ENCODE measurements at regions of chr5 and their contacts with region 1.

Region 1: GRCh38 chr5:80216753-80217596 is 38.9 kb downstream of the SERINC5 start:
- DNase-seq: peak; percentile 66
- H3K4me3 Mint-ChIP-seq: peak overlapping the region; percentile 79
- H3K27ac Mint-ChIP-seq: peak overlapping the region; percentile 90
- H3K4me1 Mint-ChIP-seq: peaks cover 87% of the 10 kb centered on the region
- H3K27me3 Mint-ChIP-seq: no peaks in the 10 kb centered on the region

Region 2: GRCh38 chr5:80174790-80175189 is 42.2 kb before region 1 on chr5:
- CTCF ChIA-PET with region 1: no interaction called
- intact Hi-C with region 1: no loop called
- DNase-seq: no peak
- H3K4me3 Mint-ChIP-seq: no peak overlapping the region
- H3K27ac Mint-ChIP-seq: peak overlapping the region; percentile 9
- H3K4me1 Mint-ChIP-seq: peaks cover 36% of the 10 kb centered on the region
- H3K27me3 Mint-ChIP-seq: no peaks in the 10 kb centered on the region

Region 3: DNA sequence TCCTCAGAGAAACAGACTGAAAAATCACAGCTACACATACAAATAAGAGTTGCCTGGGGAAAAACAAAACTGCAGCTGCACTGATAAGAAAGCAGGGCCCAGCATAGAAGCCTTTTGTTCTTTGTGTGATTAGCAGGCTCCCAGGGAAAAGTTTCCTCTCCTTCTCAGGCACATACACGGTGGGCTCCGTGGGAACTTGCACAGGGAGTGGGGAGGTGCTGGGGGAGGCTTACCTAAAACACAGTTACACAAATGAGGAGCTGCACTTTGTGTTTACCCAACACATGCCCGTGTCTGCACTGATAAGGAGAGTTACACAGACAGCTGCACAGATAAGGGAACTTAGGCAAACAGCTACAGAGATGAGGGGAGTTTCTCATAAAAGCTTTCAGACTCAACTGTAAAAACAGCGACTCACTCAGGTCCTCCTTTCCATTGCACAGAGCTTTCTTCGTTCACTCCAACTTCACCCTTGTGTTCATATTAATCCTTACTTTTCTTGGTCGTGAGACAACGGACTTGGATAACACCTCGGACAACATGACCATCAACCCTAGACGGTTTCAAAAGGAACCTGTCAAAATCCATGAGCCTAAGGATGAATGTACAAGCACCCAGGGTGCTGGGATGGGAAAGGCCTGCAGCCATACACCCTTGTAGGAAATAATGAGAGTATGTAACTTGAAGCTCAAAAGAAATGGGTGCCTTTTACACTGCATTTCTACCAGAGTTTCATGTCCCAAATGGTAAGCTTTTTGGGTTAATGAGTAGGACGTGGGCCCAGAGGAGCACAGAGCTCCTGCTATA is 12.0 kb before region 1 on chr5:
- CTCF ChIA-PET with region 1: interaction called, 6 read pairs
- intact Hi-C with region 1: loop called (anchors 1 kb)
- DNase-seq: peak; percentile 46
- H3K4me3 Mint-ChIP-seq: no peak overlapping the region
- H3K27ac Mint-ChIP-seq: peak overlapping the region; percentile 88
- H3K4me1 Mint-ChIP-seq: peaks cover 82% of the 10 kb centered on the region
- H3K27me3 Mint-ChIP-seq: no peaks in the 10 kb centered on the region

Region 4: DNA sequence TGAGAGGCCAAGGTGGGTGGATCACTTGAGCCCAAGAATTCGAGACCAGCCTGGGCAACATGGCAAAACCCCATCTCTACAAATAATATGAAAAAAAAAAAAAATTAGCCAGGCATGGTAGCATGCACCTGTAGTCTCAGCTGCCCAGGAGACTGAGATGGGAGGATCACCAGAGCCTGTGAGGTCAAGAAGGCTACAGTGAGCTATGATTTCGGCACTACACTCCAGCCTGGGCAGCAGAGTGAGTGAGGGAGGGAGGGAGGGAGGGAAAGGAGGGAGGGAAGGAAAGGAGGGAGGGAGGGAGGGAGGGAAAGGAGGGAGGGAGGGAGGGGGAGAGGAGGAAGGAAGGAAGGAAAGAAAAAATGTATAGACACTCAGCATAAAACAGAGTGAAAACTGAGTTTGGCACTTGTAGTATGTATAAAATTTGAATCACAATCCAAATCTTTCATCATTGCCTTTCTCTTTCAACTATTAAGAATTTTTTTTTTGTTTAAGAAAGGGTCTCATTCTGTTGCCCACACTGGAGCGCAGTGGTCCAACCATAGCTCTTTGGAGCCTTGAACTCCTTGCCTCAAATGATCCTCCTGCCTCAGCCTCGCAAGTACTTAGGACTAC is 11.1 kb after region 1 on chr5:
- CTCF ChIA-PET with region 1: interaction called, 4 read pairs
- intact Hi-C with region 1: loop called (anchors 1 kb)
- DNase-seq: no peak
- H3K4me3 Mint-ChIP-seq: no peak overlapping the region
- H3K27ac Mint-ChIP-seq: peak overlapping the region; percentile 79
- H3K4me1 Mint-ChIP-seq: peaks cover 72% of the 10 kb centered on the region
- H3K27me3 Mint-ChIP-seq: no peaks in the 10 kb centered on the region

Measured in activated naive CD4-positive, alpha-beta T cell treated with anti-CD3 and anti-CD28 coated beads for 36 hours (primary cell).